ENCODE measurements at regions of chr2 and their contacts with region 1.

Region 1: DNA sequence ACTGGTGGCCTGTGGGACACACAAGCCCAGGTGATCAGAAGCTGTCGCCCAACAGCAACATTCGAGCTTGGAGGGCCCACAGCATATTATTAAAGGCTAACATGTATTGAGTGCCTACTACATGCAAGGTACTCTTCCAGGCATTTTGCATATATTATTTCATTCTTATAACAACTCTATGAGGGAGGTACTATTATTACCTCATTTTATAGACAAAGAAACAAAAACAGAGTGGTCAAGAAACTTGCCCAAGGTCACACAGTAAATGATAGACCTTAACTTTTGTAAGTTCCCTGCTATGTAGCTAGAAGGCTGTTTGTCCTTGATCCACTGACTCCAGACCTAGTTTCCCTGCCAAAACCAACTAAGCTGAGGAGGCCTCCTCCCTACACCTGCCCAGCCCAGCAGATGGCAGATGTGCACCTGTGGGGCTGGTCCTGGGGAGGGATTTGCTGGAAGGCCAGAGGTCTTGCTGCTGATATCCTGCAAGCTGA is 35.7 kb downstream of the KANSL3 start:
- DNase-seq: peak; percentile 25
- ATAC-seq: peak; percentile 10
- H3K4me3 ChIP-seq: peak overlapping the region in 1 of 3 experiments; percentile 20; a peak in 1 of 6 replicates
- H3K27ac ChIP-seq: peak overlapping the region; percentile 67
- H3K4me1 ChIP-seq: peaks cover 28% of the 10 kb centered on the region
- H3K27me3 ChIP-seq: no peaks in the 10 kb centered on the region
- CTCF ChIP-seq: peak; percentile 64
- EP300 ChIP-seq: no peak
- POLR2A ChIP-seq: no peak
- RAD21 ChIP-seq: no peak

Region 2: GRCh38 chr2:96554293-96555145 is 47.9 kb before region 1 on chr2:
- CTCF ChIA-PET with region 1: no interaction called
- POLR2A ChIA-PET with region 1: interaction called, 4 read pairs
- in situ Hi-C with region 1: no loop called
- intact Hi-C with region 1: loop called (anchors 5 kb)
- DNase-seq: peak; percentile 44
- ATAC-seq: peak; percentile 31
- H3K4me3 ChIP-seq: peak overlapping the region; percentile 25 to 67 (median 29); a peak in 3 of 6 replicates
- H3K27ac ChIP-seq: no peak overlapping the region
- H3K4me1 ChIP-seq: peaks cover 69% of the 10 kb centered on the region
- H3K27me3 ChIP-seq: no peaks in the 10 kb centered on the region
- CTCF ChIP-seq: peak; percentile 97
- EP300 ChIP-seq: no peak
- POLR2A ChIP-seq: no peak
- RAD21 ChIP-seq: peak; percentile 87

Region 3: DNA sequence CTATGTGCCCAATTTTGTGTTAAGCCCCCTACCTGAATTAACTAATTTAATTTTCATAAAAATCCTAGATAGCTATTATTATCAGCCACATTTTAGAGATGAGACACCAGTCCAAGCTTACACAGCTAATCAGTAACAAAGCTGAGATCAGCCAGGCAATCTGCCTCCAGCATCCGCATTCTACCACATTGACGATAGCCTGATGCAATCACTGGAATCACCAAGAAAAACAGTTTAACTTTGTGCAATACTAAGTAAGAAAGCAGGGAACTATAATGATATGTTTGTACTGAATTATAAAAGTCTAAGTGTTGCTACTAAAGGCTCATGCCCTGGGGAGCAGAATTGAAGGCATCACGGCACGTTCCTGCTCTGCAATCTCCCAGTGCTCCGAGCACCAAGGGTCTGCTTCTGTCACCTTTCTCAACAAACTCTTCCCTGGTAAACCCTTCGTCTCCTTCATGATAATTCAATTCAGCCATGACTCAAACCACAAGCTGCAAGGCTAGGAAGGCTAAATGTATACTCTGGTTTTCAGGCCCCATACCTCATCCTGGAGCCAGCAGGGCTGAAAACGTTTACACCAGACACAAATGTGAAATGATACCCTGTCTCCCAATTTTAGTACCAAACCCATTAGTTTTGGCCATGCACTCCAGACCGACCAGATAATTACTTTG is 16.4 kb after region 1 on chr2:
- CTCF ChIA-PET with region 1: no interaction called
- POLR2A ChIA-PET with region 1: no interaction called
- in situ Hi-C with region 1: no loop called
- intact Hi-C with region 1: no loop called
- DNase-seq: no peak
- ATAC-seq: no peak
- H3K4me3 ChIP-seq: no peak overlapping the region
- H3K27ac ChIP-seq: no peak overlapping the region
- H3K4me1 ChIP-seq: peaks cover 32% of the 10 kb centered on the region
- H3K27me3 ChIP-seq: no peaks in the 10 kb centered on the region
- CTCF ChIP-seq: no peak
- EP300 ChIP-seq: no peak
- POLR2A ChIP-seq: no peak
- RAD21 ChIP-seq: no peak

Region 4: GRCh38 chr2:96638144-96639121 is 36.1 kb after region 1 on chr2 and contains the start of gene KANSL3:
- CTCF ChIA-PET with region 1: no interaction called
- POLR2A ChIA-PET with region 1: interaction called, 5 read pairs
- in situ Hi-C with region 1: no loop called
- intact Hi-C with region 1: loop called (anchors 5 kb)
- DNase-seq: peak; percentile 87
- ATAC-seq: peak; percentile 79
- H3K4me3 ChIP-seq: peak within 1 kb of the TSS; percentile 83 to 93 (median 85)
- H3K27ac ChIP-seq: peak within 1 kb of the TSS; percentile 71
- H3K4me1 ChIP-seq: peaks cover 40% of the 10 kb centered on the region
- H3K27me3 ChIP-seq: no peaks in the 10 kb centered on the region; a peak in 1 of 5 replicates
- CTCF ChIP-seq: peak; percentile 45
- EP300 ChIP-seq: peak; percentile 73 to 87
- POLR2A ChIP-seq: peak; percentile 87 to 97
- RAD21 ChIP-seq: peak; percentile 82
- total RNA-seq, gene KANSL3: 37.3 and 43.9 TPM in 2 replicates

Region 5: GRCh38 chr2:96685577-96686459 is 83.4 kb after region 1 on chr2:
- CTCF ChIA-PET with region 1: no interaction called
- POLR2A ChIA-PET with region 1: no interaction called
- in situ Hi-C with region 1: no loop called
- intact Hi-C with region 1: loop called (anchors 5 kb)
- DNase-seq: peak; percentile 74
- ATAC-seq: peak; percentile 84
- H3K4me3 ChIP-seq: peak overlapping the region; percentile 20 to 66 (median 35); a peak in 5 of 6 replicates
- H3K27ac ChIP-seq: no peak overlapping the region
- H3K4me1 ChIP-seq: peaks cover 68% of the 10 kb centered on the region
- H3K27me3 ChIP-seq: peaks cover 8 to 30% of the 10 kb centered on the region in 2 experiments; a peak in 3 of 5 replicates
- CTCF ChIP-seq: peak; percentile 80
- EP300 ChIP-seq: no peak
- POLR2A ChIP-seq: peak in 1 of 2 experiments; percentile 47; a peak in 1 of 4 replicates
- RAD21 ChIP-seq: peak; percentile 84

Region 6: DNA sequence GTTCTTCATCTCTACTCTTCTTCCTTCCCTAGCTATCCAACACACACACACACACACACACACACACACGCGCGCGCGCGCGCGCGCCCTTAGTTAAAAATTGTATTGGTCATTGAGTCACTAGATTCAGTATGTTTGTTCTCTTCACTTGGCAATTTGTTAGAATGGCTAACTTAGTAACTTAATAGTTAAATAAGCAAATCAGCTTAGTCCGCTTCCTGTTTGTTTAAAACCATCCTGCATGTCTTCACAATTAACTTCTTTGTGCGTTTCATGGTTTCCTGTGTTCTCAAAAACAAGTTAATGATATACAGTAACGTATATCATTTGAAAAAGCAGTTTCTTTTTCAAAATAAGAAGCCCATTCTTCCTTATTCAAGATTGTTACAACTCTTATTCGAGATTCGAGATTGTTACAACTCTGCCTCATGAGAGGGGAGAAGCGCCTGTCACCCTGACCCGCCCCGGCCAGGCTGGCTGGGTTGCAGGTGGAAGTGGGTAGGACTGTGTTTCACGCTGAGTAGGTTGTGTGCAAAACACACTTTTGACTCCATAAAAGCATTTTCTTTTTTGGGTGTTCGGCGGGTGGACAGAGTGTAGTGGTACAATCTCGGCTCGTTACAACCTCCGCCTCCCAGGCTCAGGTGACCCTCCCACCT is 204.2 kb after region 1 on chr2:
- CTCF ChIA-PET with region 1: no interaction called
- POLR2A ChIA-PET with region 1: interaction called, 3 read pairs
- in situ Hi-C with region 1: no loop called
- intact Hi-C with region 1: loop called (anchors 2 kb)
- DNase-seq: peak; percentile 58
- ATAC-seq: no peak
- H3K4me3 ChIP-seq: no peak overlapping the region
- H3K27ac ChIP-seq: peak overlapping the region; percentile 50
- H3K4me1 ChIP-seq: peaks cover 59% of the 10 kb centered on the region
- H3K27me3 ChIP-seq: no peaks in the 10 kb centered on the region
- CTCF ChIP-seq: no peak
- EP300 ChIP-seq: no peak
- POLR2A ChIP-seq: no peak
- RAD21 ChIP-seq: no peak

Region 7: GRCh38 chr2:96816128-96816835 is 213.9 kb after region 1 on chr2 and contains the start of gene CNNM3:
- CTCF ChIA-PET with region 1: no interaction called
- POLR2A ChIA-PET with region 1: interaction called, 3 read pairs
- in situ Hi-C with region 1: no loop called
- intact Hi-C with region 1: loop called (anchors 5 kb)
- DNase-seq: peak; percentile 91
- ATAC-seq: peak; percentile 87
- H3K4me3 ChIP-seq: peak within 1 kb of the TSS; percentile 87 to 96 (median 91)
- H3K27ac ChIP-seq: peak within 1 kb of the TSS; percentile 92
- H3K4me1 ChIP-seq: peaks cover 72% of the 10 kb centered on the region
- H3K27me3 ChIP-seq: no peaks in the 10 kb centered on the region; a peak in 1 of 5 replicates
- CTCF ChIP-seq: peak; percentile 72
- EP300 ChIP-seq: no peak
- POLR2A ChIP-seq: peak in 1 of 2 experiments; percentile 65; a peak in 2 of 4 replicates
- RAD21 ChIP-seq: peak; percentile 27
- total RNA-seq, gene CNNM3: 8.4 and 21.2 TPM in 2 replicates

Region 8: DNA sequence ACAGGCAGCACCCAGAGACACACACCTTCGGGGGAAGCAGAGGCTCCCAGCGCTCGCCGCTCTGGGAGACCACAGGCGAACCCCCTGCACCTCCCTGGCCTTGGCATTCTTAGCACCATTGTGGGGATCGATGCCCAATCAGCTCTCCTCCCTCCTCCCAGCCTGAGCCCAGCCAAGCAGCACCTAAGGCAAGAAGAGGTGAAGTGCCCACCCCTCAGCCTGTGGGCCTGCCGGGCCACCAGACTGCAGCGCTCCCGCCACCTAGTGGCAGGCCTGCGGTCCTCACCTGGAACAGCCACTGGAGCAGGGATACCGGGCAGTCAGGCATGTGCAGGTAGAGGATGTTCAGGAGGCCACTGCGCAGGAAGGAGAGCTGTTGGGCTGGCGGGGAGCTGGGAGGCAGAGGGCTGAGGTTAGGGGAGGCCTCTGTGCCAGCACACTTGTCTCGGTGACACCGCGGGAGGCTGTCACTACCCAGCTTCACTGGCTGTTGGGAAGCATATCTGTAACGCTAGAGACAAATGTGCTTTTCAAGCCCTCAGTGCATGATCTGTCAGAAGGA is 348.8 kb after region 1 on chr2:
- CTCF ChIA-PET with region 1: no interaction called
- POLR2A ChIA-PET with region 1: no interaction called
- in situ Hi-C with region 1: no loop called
- intact Hi-C with region 1: loop called (anchors 5 kb)
- DNase-seq: peak; percentile 64
- ATAC-seq: peak; percentile 96
- H3K4me3 ChIP-seq: peak overlapping the region in 1 of 3 experiments; percentile 8; a peak in 1 of 6 replicates
- H3K27ac ChIP-seq: no peak overlapping the region
- H3K4me1 ChIP-seq: peaks cover 30% of the 10 kb centered on the region
- H3K27me3 ChIP-seq: peaks cover 13 to 78% of the 10 kb centered on the region in 2 experiments; a peak in 4 of 5 replicates
- CTCF ChIP-seq: peak; percentile 100
- EP300 ChIP-seq: no peak
- POLR2A ChIP-seq: no peak
- RAD21 ChIP-seq: peak; percentile 95

Measured in HepG2 (cell line).